WTC11 (cell line): ENCODE measurements at regions of chr20 and their contacts with region 1.

Region 1: DNA sequence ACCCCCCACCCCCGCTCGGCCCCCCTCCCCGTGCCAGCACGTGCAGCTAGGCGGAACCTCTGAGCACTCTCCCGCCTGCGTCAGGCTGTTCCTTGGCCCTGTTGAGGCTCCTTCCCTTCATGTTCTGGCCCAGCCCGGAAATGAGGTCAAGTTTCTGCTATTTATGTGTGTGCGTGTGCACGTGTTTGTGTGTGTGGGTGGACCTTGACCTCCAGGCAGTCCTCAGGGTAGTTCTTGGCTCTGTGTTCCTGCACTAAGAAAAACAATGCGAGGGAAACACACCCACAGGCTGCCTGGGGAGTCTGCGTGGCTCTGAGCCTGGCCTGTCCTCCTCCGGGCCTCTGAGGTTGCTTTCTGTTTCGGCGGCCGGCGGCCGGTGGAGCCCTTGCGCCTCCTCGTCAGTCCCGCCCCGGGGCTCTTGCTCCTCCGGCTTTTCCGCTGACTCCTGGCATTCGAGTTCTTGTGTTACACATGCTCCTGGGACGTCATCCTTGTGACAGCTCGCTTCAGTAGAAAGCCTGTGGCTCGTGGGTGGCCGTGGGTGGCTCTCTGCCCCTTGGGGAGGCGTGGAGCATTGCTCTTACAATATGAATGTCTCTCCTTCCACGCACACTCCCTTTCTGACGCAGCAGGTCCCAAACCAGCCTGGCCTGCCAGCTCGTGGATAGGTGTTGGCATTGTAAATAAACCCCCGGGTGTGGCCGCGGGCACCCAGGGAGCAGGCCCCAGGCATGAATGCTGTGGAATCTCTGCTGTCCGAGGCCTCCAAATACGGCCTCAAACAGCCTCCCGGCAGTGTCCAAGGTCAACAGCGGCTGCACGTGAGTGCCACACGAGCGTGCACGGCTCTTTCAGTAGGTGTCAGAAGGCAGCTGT is 10.0 kb downstream of the SLCO4A1 start:
- DNase-seq: peak; percentile 50
- ATAC-seq: peak; percentile 39
- H3K4me3 Mint-ChIP-seq: no peak overlapping the region
- H3K27ac Mint-ChIP-seq: peak overlapping the region; percentile 82
- H3K4me1 Mint-ChIP-seq: peaks cover 18% of the 10 kb centered on the region
- H3K27me3 Mint-ChIP-seq: no peaks in the 10 kb centered on the region
- CTCF ChIP-seq: no peak

Region 2: GRCh38 chr20:62642040-62642665 is 10.1 kb before region 1 on chr20 and contains the start of gene SLCO4A1:
- CTCF ChIA-PET with region 1: interaction called, 14 read pairs
- POLR2A ChIA-PET with region 1: no interaction called
- DNase-seq: peak; percentile 73
- ATAC-seq: peak; percentile 76
- H3K4me3 Mint-ChIP-seq: peak within 1 kb of the TSS; percentile 65
- H3K27ac Mint-ChIP-seq: no peak within 1 kb of the TSS
- H3K4me1 Mint-ChIP-seq: peaks cover 13% of the 10 kb centered on the region
- H3K27me3 Mint-ChIP-seq: peaks cover 41% of the 10 kb centered on the region
- CTCF ChIP-seq: no peak
- total RNA-seq, gene SLCO4A1: 15.2 to 19.9 TPM (median 18.5 TPM) in 3 replicates

Region 3: GRCh38 chr20:62666736-62667529 is 14.6 kb after region 1 on chr20:
- CTCF ChIA-PET with region 1: no interaction called
- POLR2A ChIA-PET with region 1: no interaction called
- DNase-seq: no peak
- ATAC-seq: no peak
- H3K4me3 Mint-ChIP-seq: no peak overlapping the region
- H3K27ac Mint-ChIP-seq: no peak overlapping the region; the same call in 1 of the 2 replicates
- H3K4me1 Mint-ChIP-seq: peaks cover 5% of the 10 kb centered on the region
- H3K27me3 Mint-ChIP-seq: no peaks in the 10 kb centered on the region
- CTCF ChIP-seq: no peak

Region 4: DNA sequence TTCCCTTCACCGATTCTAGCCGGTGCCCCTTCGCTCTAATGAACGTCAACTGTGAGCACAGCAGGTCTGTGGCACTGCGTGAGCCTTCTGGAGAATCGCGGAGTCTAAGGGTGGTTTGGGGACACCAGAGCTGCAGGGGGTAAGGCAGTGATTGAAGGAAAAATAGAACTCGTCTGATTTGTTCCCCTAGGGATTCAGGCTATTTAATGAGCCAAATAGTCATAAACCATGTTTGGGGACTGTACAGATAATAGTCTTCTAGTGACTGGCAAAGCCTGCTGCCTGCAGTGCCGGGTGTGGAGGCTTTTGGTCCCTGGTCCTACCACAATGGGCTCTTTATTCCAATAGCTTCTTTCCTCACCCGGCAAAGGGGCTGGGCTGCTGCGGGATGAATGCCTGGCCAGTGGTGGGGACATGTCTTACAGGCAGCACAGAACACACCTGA is 45.2 kb after region 1 on chr20:
- CTCF ChIA-PET with region 1: no interaction called
- POLR2A ChIA-PET with region 1: no interaction called
- DNase-seq: no peak
- ATAC-seq: no peak
- H3K4me3 Mint-ChIP-seq: no peak overlapping the region
- H3K27ac Mint-ChIP-seq: peak overlapping the region; percentile 19; the same call in 1 of the 2 replicates
- H3K4me1 Mint-ChIP-seq: no peaks in the 10 kb centered on the region
- H3K27me3 Mint-ChIP-seq: peaks cover under 1% of the 10 kb centered on the region; the same call in 1 of the 2 replicates
- CTCF ChIP-seq: no peak

Region 5: DNA sequence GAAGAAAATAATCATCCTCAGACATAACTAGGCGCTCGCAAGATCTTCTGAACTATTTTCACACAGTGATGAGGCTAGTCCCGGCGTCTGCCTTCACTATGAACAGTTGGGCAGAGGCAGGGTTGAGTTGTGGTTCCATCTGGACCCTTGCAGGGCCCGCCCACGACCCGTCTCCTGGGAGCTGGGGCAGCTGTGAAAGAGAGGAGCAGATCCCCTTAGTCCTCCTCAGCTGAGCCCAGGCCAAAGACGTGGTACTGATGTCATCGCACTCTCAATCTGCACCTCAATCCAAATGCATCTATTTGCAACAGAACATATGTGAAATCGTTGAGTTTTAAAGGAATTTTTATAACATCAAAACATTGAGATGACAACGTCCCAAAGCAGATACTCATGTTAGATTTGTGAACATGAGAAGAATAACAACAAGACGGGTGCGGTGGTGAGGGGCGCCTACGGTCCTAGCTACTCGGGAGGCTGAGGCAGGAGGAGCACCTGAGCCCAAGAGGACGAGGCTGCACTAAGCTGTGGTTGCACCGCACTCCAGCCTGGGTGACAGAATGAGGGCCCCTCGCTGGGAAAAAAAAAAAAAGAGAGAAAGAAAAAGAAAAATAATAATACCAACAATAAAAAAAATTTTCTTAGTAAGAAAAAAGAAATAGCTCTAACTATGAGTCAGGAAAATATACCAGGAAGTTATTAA is 194.1 kb after region 1 on chr20:
- CTCF ChIA-PET with region 1: no interaction called
- POLR2A ChIA-PET with region 1: no interaction called
- DNase-seq: no peak
- ATAC-seq: no peak
- H3K4me3 Mint-ChIP-seq: no peak overlapping the region
- H3K27ac Mint-ChIP-seq: peak overlapping the region; percentile 27
- H3K4me1 Mint-ChIP-seq: peaks cover 13% of the 10 kb centered on the region
- H3K27me3 Mint-ChIP-seq: no peaks in the 10 kb centered on the region
- CTCF ChIP-seq: no peak

Region 6: DNA sequence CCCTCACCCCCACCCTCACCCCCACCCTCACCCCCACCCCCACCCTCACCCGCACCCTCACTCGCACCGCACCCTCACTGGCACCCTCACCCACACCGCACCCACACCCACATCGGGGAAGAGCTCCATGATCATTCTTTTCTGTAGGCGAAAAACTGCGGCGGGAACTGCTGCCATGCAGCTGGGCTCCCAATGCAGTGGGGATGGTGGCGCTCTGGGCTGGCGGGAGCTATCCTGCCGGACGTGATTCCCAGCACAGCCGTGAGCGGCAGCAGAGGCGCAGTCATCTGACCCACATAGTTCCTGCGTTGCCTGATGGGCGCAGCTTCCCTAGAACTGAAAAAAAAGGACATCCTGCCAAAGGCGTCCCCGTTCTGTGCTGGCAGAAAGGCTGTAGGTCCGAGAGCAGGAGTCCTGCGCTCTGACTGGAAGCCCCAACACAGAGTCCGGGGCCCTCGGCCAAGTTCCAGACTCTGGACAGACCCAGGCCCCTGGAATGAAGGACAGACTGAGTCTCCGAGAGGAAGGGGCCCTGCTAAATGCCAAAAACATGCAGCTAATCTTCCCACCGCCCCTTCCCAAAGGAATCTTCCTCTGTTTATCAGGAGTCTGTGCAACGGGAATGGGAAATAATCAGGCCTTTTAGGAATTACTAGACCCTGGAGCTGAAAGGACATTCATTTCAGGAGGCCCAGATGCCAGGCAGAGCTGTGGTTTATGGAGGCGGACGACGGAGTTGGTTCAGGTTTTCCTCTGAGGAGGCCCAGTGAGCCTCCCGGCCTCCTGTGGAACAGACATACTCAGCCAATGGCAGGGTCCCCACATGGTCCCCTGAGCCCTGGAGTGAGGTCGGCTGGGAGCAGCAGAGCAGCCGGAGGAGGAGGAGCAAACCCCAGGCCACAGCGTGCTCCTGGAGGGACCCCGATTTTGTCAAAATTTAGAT is 223.4 kb after region 1 on chr20:
- CTCF ChIA-PET with region 1: no interaction called
- POLR2A ChIA-PET with region 1: no interaction called
- DNase-seq: peak; percentile 83
- ATAC-seq: peak; percentile 62
- H3K4me3 Mint-ChIP-seq: peak overlapping the region; percentile 34; the same call in 1 of the 2 replicates
- H3K27ac Mint-ChIP-seq: peak overlapping the region; percentile 95
- H3K4me1 Mint-ChIP-seq: peaks cover 32% of the 10 kb centered on the region
- H3K27me3 Mint-ChIP-seq: no peaks in the 10 kb centered on the region; the same call in 1 of the 2 replicates
- CTCF ChIP-seq: no peak